IMR-90 (cell line): ENCODE measurements at regions of chr18 and their contacts with region 1.

Region 1: DNA sequence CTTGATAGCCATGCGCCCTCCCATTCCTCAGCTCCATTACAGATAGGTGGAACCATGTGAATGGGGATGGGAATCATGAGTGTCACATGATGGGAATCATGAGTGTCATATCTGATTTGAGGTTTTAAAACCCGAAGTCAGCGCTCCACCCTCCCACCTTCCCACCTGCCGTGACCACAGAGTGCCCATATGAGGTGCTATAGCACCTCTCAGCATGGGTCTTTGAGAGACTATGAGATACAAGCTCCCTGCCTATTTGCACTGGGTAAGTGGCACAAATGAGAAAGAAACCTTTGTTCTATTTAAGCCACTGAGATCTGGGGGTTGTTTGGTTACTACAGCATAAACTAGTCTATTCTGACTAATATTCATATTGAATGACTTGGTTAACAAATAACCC is 78.5 kb upstream of the PTPRM start:
- DNase-seq: no peak
- ATAC-seq: no peak
- H3K4me3 ChIP-seq: no peak overlapping the region
- H3K27ac ChIP-seq: no peak overlapping the region
- H3K4me1 ChIP-seq: no peaks in the 10 kb centered on the region
- H3K27me3 ChIP-seq: peaks cover 3% of the 10 kb centered on the region; the same call in 1 of the 2 replicates
- CTCF ChIP-seq: no peak
- POLR2A ChIP-seq: no peak
- RAD21 ChIP-seq: no peak

Region 2: DNA sequence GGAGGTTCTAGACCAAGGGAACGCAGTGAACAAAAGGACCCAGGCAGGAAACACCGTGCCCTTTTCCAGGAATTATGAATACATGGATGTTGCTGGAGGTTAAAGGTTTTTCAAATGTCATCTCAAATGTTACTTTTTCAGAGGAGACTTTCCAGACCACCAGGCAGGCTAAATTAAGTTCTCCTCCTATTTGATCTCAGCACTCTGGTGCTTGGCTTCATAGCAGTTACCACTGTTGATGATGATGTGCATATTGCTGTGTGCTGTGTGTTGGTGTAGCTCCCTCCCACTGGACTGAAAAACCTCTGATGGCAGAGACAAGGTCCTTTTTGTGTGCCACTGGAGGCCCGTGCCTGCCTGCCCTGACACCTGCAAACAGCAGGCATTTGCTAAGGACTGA is 58.7 kb before region 1 on chr18:
- CTCF ChIA-PET with region 1: no interaction called
- POLR2A ChIA-PET with region 1: no interaction called
- dilution Hi-C with region 1: no loop called
- in situ Hi-C with region 1: no loop called
- intact Hi-C with region 1: loop called (anchors 10 kb)
- DNase-seq: no peak
- ATAC-seq: no peak
- H3K4me3 ChIP-seq: no peak overlapping the region
- H3K27ac ChIP-seq: no peak overlapping the region
- H3K4me1 ChIP-seq: no peaks in the 10 kb centered on the region
- H3K27me3 ChIP-seq: no peaks in the 10 kb centered on the region
- CTCF ChIP-seq: no peak
- POLR2A ChIP-seq: no peak
- RAD21 ChIP-seq: no peak

Region 3: GRCh38 chr18:7452331-7452730 is 36.2 kb before region 1 on chr18:
- CTCF ChIA-PET with region 1: no interaction called
- POLR2A ChIA-PET with region 1: no interaction called
- dilution Hi-C with region 1: no loop called
- in situ Hi-C with region 1: no loop called
- intact Hi-C with region 1: no loop called
- DNase-seq: peak; percentile 4
- ATAC-seq: peak; percentile 88
- H3K4me3 ChIP-seq: no peak overlapping the region
- H3K27ac ChIP-seq: no peak overlapping the region
- H3K4me1 ChIP-seq: no peaks in the 10 kb centered on the region
- H3K27me3 ChIP-seq: peaks cover 10% of the 10 kb centered on the region
- CTCF ChIP-seq: 0 out of 2 replicates have a peak, but pooled peaks have one; percentile 34
- POLR2A ChIP-seq: no peak
- RAD21 ChIP-seq: peak; percentile 17; the same call in 1 of the 2 replicates

Region 4: DNA sequence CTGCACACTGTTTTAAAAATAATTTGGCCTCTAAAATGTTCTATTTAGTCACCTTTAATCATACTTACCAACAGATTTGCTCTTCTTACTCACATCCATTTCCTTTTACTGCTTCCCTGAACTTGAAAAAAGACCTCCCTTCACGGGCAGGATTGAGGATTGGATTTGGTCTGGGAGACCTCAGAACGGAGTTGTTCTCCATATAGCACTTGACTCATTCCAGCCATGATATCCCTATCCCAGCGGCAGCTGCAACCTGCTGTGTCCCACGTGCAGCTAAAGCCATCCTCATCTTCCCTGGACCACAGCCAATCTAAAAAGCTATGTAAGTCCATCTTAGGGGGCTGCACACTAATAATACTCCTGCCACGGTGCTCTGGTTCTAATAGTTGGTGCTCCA is 18.5 kb before region 1 on chr18:
- CTCF ChIA-PET with region 1: no interaction called
- POLR2A ChIA-PET with region 1: no interaction called
- dilution Hi-C with region 1: no loop called
- in situ Hi-C with region 1: no loop called
- intact Hi-C with region 1: no loop called
- DNase-seq: no peak
- ATAC-seq: no peak
- H3K4me3 ChIP-seq: no peak overlapping the region
- H3K27ac ChIP-seq: no peak overlapping the region
- H3K4me1 ChIP-seq: no peaks in the 10 kb centered on the region
- H3K27me3 ChIP-seq: peaks cover 5% of the 10 kb centered on the region
- CTCF ChIP-seq: no peak
- POLR2A ChIP-seq: no peak
- RAD21 ChIP-seq: no peak